Common myeloid progenitor, CD34-positive (primary cell): ENCODE measurements at regions of chr18 and their contacts with region 1.

Region 1: GRCh38 chr18:3498698-3499471 is 48.9 kb downstream of the TGIF1 start:
- DNase-seq: peak; percentile 33 to 72 (median 57)
- H3K4me3 ChIP-seq: peak overlapping the region; percentile 46 to 78 (median 63)
- H3K27ac ChIP-seq: no peak overlapping the region
- H3K4me1 ChIP-seq: peaks cover 9 to 23% (median 19%) of the 10 kb centered on the region in 4 experiments
- H3K27me3 ChIP-seq: peaks cover 0 to 4% (median 0%) of the 10 kb centered on the region in 5 experiments

Region 2: DNA sequence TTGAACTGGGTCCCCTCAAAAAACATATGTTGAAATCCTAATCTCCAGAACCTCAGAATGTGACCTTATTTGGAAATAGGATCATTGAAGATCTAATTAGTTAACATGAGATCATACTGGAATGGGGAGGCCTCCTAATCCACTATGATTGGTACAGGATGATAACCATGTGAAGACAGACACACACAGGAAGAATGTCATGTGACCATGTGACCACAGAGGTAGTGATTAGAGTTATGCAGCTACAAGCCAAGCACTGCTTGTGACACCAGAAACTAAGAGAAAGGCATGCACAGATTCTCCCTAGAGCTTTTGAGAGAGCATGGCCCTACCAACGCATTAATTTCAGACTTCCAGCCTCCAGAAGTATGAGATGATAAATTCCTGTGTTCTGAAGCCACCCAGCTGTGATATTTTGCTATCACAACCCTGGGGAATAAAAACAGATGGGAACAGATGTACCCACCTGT is 95.9 kb before region 1 on chr18:
- CTCF ChIA-PET with region 1: no interaction called
- POLR2A ChIA-PET with region 1: no interaction called
- DNase-seq: no peak
- H3K4me3 ChIP-seq: no peak overlapping the region
- H3K27ac ChIP-seq: no peak overlapping the region
- H3K4me1 ChIP-seq: peaks cover 0 to 5% (median 0%) of the 10 kb centered on the region in 4 experiments
- H3K27me3 ChIP-seq: no peaks in the 10 kb centered on the region

Region 3: DNA sequence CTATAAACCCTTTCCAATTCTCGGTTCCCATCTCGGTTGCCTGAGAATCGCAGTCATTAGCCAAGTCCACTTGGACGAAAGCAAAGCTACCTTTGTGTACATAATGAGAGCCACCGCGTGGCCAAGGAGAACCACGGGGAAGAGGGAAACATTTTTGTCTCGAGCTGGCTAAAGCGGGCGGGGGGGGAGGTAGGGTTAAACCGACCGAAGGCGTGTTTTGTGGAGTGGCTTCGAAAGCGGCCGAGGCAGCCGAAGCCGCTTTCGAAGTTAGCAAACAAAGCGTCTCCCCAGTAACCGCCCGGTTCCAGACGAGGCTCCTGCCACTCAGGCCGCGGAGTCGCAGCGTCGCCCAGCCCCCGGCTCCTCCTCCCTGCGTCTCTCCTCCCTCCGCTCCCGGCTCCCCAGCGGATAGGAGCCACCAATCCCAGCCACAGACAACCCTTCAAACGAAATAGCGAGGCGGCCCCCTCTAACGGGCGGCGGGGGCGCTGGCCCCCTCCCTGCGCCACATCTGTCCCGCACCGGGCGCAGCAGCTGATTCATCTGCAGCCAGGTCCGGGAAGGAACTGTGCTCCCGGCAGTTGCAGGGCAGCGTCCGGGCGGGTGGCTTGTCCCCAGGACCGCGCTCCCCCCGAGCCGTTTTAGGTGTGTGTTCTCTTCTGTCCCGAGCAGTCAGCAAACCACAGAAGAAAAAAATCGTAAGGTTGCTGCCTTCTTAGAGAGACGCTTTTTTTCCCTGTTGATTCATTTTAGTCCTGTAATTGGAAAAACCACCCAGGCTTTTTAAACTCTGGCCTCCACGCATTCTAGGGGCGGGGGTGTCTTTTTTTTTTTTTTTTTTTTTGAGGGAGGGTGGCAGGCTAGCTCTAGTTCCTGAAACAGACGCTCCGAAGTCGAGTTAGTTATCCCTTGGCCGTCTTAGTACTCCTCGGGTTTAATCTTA is 50.7 kb before region 1 on chr18:
- CTCF ChIA-PET with region 1: interaction called, 12 read pairs
- POLR2A ChIA-PET with region 1: interaction called, 12 read pairs
- DNase-seq: peak; percentile 95 to 98 (median 96)
- H3K4me3 ChIP-seq: peak overlapping the region; percentile 42 to 95 (median 86)
- H3K27ac ChIP-seq: peak overlapping the region; percentile 95 to 98
- H3K4me1 ChIP-seq: peaks cover 13 to 62% (median 53%) of the 10 kb centered on the region in 4 experiments
- H3K27me3 ChIP-seq: no peaks in the 10 kb centered on the region

Region 4: GRCh38 chr18:4024702-4025101 is 525.8 kb after region 1 on chr18:
- CTCF ChIA-PET with region 1: no interaction called
- POLR2A ChIA-PET with region 1: no interaction called
- DNase-seq: no peak
- H3K4me3 ChIP-seq: no peak overlapping the region
- H3K27ac ChIP-seq: no peak overlapping the region
- H3K4me1 ChIP-seq: no peaks in the 10 kb centered on the region
- H3K27me3 ChIP-seq: no peaks in the 10 kb centered on the region